ENCODE measurements at regions of chr17 and their contacts with region 1.

Region 1: GRCh38 chr17:39164675-39165143 is 1.3 kb downstream of the ARL5C start:
- DNase-seq: peak; percentile 70 to 77 (median 75)
- H3K4me3 ChIP-seq: peak overlapping the region; percentile 61
- H3K4me3 Mint-ChIP-seq: peak overlapping the region; percentile 86 to 96 (median 90)
- H3K27ac ChIP-seq: peak overlapping the region; percentile 28
- H3K27ac Mint-ChIP-seq: peak overlapping the region in 5 of 7 donors; percentile 0 to 90 (median 54)
- H3K4me1 ChIP-seq: peaks cover 24% of the 10 kb centered on the region
- H3K4me1 Mint-ChIP-seq: peaks cover 8 to 29% (median 16%) of the 10 kb centered on the region in 4 donors
- H3K27me3 ChIP-seq: no peaks in the 10 kb centered on the region
- H3K27me3 Mint-ChIP-seq: peaks cover 14 to 17% of the 10 kb centered on the region in 2 donors

Region 2: GRCh38 chr17:39094607-39095308 is 70.0 kb before region 1 on chr17:
- CTCF ChIA-PET with region 1: interaction called, 11 read pairs
- POLR2A ChIA-PET with region 1: interaction called, 3 read pairs
- intact Hi-C with region 1: no loop called
- DNase-seq: peak; percentile 32 to 74 (median 69)
- H3K4me3 ChIP-seq: peak overlapping the region in 1 of 2 donors; percentile 29
- H3K4me3 Mint-ChIP-seq: peak overlapping the region; percentile 72 to 91 (median 84)
- H3K27ac ChIP-seq: peak overlapping the region; percentile 42
- H3K27ac Mint-ChIP-seq: peak overlapping the region; percentile 82 to 98 (median 96)
- H3K4me1 ChIP-seq: peaks cover 89% of the 10 kb centered on the region
- H3K4me1 Mint-ChIP-seq: peaks cover 65 to 87% (median 75%) of the 10 kb centered on the region in 4 donors
- H3K27me3 ChIP-seq: no peaks in the 10 kb centered on the region
- H3K27me3 Mint-ChIP-seq: no peaks in the 10 kb centered on the region

Region 3: DNA sequence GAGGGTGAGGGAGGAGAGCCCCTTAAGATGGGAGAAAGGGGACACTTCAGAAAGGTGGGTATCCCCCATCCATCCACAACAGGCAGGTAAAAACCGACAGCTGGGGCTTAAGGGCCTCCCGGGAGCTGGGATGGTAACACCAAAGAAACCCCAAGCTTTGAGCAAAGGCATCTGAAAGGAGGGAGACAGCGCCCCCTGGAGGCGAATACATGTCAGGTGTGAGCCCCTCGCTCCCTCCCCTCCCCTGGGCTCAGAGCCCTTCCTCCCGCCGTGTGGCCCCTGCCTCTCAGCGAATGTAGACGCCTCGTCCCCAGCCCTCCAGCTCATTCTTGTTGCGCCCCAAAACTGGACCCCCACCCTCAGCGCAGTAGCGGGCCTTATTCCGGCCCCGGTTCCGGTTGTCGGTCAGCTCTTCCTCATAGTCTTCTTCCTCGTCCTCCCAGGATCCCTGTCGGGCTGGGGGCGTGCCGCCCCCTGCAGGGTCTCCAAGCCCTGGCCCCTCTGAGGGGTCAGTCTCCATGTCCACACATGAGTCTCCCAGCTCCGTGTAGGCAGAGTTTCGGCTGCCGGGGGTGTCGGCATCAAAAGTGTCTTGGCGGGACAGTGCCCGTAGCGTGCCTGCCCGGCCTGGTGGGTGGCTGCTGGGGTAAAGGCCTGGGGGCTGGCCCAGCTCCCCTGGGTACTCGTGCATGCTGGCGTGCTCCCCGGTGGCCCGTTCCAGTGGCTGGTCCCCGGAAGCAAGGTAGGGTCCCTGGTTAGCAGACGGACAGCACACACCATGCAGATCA is 10.4 kb after region 1 on chr17:
- CTCF ChIA-PET with region 1: interaction called, 106 read pairs
- POLR2A ChIA-PET with region 1: interaction called, 9 read pairs
- intact Hi-C with region 1: no loop called
- DNase-seq: peak; percentile 68 to 73 (median 72)
- H3K4me3 ChIP-seq: no peak overlapping the region
- H3K4me3 Mint-ChIP-seq: no peak overlapping the region
- H3K27ac ChIP-seq: no peak overlapping the region
- H3K27ac Mint-ChIP-seq: peak overlapping the region in 6 of 7 donors; percentile 23 to 84 (median 67)
- H3K4me1 ChIP-seq: no peaks in the 10 kb centered on the region
- H3K4me1 Mint-ChIP-seq: peaks cover 5 to 24% (median 10%) of the 10 kb centered on the region in 4 donors
- H3K27me3 ChIP-seq: no peaks in the 10 kb centered on the region
- H3K27me3 Mint-ChIP-seq: no peaks in the 10 kb centered on the region

Region 4: DNA sequence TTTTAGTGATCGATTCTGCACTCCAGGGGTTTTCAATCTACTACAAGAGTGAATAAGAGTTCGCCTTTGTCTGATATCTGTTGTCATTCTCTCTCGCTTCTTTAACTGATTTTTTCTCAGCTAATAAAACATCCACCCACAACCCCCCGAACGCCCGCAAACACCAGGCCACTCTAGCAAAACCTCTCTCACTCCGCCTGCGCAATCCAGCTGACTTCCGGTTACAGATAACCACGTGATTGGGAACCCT is 35.0 kb after region 1 on chr17:
- CTCF ChIA-PET with region 1: interaction called, 16 read pairs
- POLR2A ChIA-PET with region 1: interaction called, 8 read pairs
- intact Hi-C with region 1: no loop called
- DNase-seq: peak in 4 of 5 donors; percentile 92 to 94 (median 92)
- H3K4me3 ChIP-seq: peak overlapping the region; percentile 77 to 93
- H3K4me3 Mint-ChIP-seq: peak overlapping the region; percentile 86 to 98 (median 96)
- H3K27ac ChIP-seq: peak overlapping the region; percentile 98
- H3K27ac Mint-ChIP-seq: peak overlapping the region; percentile 96 to 100 (median 100)
- H3K4me1 ChIP-seq: peaks cover 58% of the 10 kb centered on the region
- H3K4me1 Mint-ChIP-seq: peaks cover 37 to 73% (median 58%) of the 10 kb centered on the region in 4 donors
- H3K27me3 ChIP-seq: no peaks in the 10 kb centered on the region
- H3K27me3 Mint-ChIP-seq: no peaks in the 10 kb centered on the region

Region 5: DNA sequence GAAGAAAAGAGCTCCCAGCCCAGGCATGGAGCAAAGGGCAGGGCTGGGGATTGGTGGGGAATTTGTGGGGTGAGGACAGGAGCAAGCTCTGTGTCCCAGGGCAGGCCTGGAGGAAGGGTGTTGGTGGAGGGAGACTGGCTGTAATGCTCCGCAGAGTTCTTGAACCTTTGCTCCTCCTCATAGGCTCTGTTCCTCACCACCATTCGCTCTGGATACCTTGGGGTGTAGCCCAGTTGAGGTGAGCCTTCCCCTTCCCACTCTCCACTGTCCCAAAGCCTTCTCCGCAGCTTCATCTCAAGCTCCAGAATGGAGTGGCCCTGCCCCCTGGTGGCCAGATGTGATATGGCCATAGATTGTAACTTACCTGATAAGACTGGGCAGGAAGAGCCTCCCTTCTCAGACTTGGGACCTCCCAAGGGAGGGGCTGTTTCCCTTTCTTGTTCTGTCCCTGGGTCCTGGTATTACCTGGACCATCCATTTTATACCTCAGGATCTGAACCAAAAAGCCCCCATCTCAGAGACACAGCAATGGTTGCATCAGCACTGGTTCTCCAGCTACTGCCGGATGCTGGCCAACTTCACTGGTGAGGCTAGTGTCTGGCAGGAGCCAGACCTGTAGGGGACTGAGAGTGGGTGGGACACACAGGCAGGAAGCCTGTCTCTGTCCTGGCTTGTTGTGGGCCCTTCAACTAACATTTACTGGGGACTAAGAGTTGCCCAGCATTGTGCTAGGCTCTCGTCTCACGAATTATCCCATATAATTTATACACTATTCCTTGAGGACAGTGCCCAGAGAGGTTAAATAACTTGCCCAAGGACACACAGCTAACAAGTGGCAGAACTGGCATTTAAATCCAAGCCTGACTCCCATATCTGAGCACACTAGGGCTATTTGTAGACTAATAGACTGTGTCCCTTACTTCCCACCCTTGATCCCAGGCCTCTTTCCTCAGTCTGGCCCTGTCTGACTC is 80.2 kb after region 1 on chr17:
- CTCF ChIA-PET with region 1: interaction called, 44 read pairs
- POLR2A ChIA-PET with region 1: interaction called, 7 read pairs
- intact Hi-C with region 1: loop called (anchors 1 kb)
- DNase-seq: peak; percentile 74 to 83 (median 78)
- H3K4me3 ChIP-seq: no peak overlapping the region
- H3K4me3 Mint-ChIP-seq: peak overlapping the region in 1 of 8 donors; percentile 57
- H3K27ac ChIP-seq: no peak overlapping the region
- H3K27ac Mint-ChIP-seq: peak overlapping the region in 5 of 7 donors; percentile 6 to 92 (median 44)
- H3K4me1 ChIP-seq: peaks cover 11% of the 10 kb centered on the region
- H3K4me1 Mint-ChIP-seq: peaks cover 5 to 14% (median 9%) of the 10 kb centered on the region in 4 donors
- H3K27me3 ChIP-seq: no peaks in the 10 kb centered on the region
- H3K27me3 Mint-ChIP-seq: peaks cover 2% of the 10 kb centered on the region in 2 donors

Measured in CD4-positive, alpha-beta memory T cell (primary cell).